CD8-positive, alpha-beta T cell (primary cell): ENCODE measurements at regions of chr13 and their contacts with region 1.

Region 1: GRCh38 chr13:46553886-46554858 is 1.2 kb downstream of the LRCH1 start:
- DNase-seq: peak; percentile 29 to 91 (median 66)
- ATAC-seq: peak; percentile 54
- H3K4me3 ChIP-seq: peak overlapping the region; percentile 87 to 95
- H3K4me3 Mint-ChIP-seq: peak overlapping the region; percentile 93
- H3K27ac ChIP-seq: peak overlapping the region; percentile 70 to 83
- H3K27ac Mint-ChIP-seq: peak overlapping the region; percentile 94
- H3K4me1 ChIP-seq: peaks cover 28% of the 10 kb centered on the region
- H3K4me1 Mint-ChIP-seq: peaks cover 53% of the 10 kb centered on the region
- H3K27me3 ChIP-seq: no peaks in the 10 kb centered on the region
- H3K27me3 Mint-ChIP-seq: no peaks in the 10 kb centered on the region
- CTCF ChIP-seq: no peak

Region 2: DNA sequence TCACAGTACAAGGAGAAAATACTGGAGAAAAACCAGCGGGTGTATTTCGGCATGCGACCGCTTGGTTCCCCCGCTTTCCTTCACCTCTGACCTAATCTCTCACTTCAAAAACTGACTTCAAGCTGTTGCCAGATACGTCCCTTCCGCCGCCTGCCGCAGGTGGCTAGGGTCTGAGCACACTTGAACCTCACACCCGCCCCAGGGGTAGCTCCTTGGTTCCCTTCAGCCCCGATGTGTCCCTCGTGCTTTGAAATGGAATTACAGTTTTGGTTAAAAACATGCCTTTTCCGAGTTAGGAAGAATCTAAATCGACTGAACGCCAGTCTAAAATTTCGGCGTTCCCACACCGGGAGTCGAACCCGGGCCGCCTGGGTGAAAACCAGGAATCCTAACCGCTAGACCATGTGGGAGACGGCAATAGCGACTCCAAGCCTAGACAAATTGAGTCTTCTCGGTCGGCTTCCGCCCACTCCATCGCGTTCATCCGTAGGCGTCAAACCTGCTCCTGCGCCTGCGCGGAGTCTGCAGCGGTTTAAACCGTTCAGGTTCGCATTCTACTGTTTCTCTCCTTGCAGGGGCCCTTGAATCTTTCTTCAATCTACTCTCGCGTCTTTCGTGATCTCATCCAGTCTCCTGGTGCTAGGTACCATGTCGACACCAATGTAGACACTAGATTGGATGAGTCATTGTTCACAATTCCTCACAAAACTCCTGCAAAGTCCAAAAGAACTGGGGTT is 1636.4 kb before region 1 on chr13:
- CTCF ChIA-PET with region 1: no interaction called
- POLR2A ChIA-PET with region 1: no interaction called
- intact Hi-C with region 1: loop called in 1 of 2 experiments (anchors 10 kb)
- DNase-seq: peak; percentile 95 to 99 (median 98)
- ATAC-seq: peak; percentile 78
- H3K4me3 ChIP-seq: peak overlapping the region; percentile 54 to 66
- H3K4me3 Mint-ChIP-seq: no peak overlapping the region
- H3K27ac ChIP-seq: peak overlapping the region; percentile 66 to 90
- H3K27ac Mint-ChIP-seq: no peak overlapping the region
- H3K4me1 ChIP-seq: peaks cover 7% of the 10 kb centered on the region
- H3K4me1 Mint-ChIP-seq: peaks cover 14% of the 10 kb centered on the region
- H3K27me3 ChIP-seq: no peaks in the 10 kb centered on the region
- H3K27me3 Mint-ChIP-seq: no peaks in the 10 kb centered on the region
- CTCF ChIP-seq: peak; percentile 39

Region 3: DNA sequence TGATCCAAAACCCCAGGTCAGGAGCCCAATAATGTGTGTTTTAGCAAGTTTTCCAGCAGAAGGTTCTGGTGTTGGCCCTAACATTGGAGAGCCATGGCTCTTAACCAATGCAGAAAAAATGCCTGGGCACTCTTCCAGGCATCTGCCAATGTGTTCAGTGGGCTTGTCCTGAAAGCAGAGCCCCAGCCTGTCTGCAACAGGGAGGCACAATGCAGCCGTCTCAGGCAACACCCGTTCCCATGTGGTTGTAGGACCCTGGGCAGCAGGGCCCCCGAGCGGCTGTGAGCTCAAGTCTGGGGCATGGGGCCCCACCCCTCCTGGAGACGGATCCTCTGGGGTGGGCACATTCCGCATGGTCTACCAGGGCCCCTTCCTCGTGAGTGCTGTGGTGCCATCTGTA is 644.5 kb before region 1 on chr13:
- CTCF ChIA-PET with region 1: no interaction called
- POLR2A ChIA-PET with region 1: no interaction called
- intact Hi-C with region 1: no loop called
- DNase-seq: no peak
- ATAC-seq: no peak
- H3K4me3 ChIP-seq: no peak overlapping the region
- H3K4me3 Mint-ChIP-seq: no peak overlapping the region
- H3K27ac ChIP-seq: no peak overlapping the region
- H3K27ac Mint-ChIP-seq: no peak overlapping the region
- H3K4me1 ChIP-seq: no peaks in the 10 kb centered on the region
- H3K4me1 Mint-ChIP-seq: no peaks in the 10 kb centered on the region
- H3K27me3 ChIP-seq: no peaks in the 10 kb centered on the region
- H3K27me3 Mint-ChIP-seq: no peaks in the 10 kb centered on the region
- CTCF ChIP-seq: no peak

Region 4: GRCh38 chr13:46492946-46493345 is 61.2 kb before region 1 on chr13:
- CTCF ChIA-PET with region 1: interaction called, 5 read pairs
- POLR2A ChIA-PET with region 1: no interaction called
- intact Hi-C with region 1: loop called (anchors 1 to 2 kb)
- DNase-seq: peak in 3 of 9 experiments; percentile 8 to 53 (median 42)
- ATAC-seq: no peak
- H3K4me3 ChIP-seq: no peak overlapping the region
- H3K4me3 Mint-ChIP-seq: no peak overlapping the region
- H3K27ac ChIP-seq: no peak overlapping the region
- H3K27ac Mint-ChIP-seq: no peak overlapping the region
- H3K4me1 ChIP-seq: no peaks in the 10 kb centered on the region
- H3K4me1 Mint-ChIP-seq: no peaks in the 10 kb centered on the region
- H3K27me3 ChIP-seq: no peaks in the 10 kb centered on the region
- H3K27me3 Mint-ChIP-seq: peaks cover 3% of the 10 kb centered on the region
- CTCF ChIP-seq: peak; percentile 79

Region 5: GRCh38 chr13:46603165-46603603 is 49.0 kb after region 1 on chr13:
- CTCF ChIA-PET with region 1: interaction called, 13 read pairs
- POLR2A ChIA-PET with region 1: no interaction called
- intact Hi-C with region 1: no loop called
- DNase-seq: no peak
- ATAC-seq: no peak
- H3K4me3 ChIP-seq: no peak overlapping the region
- H3K4me3 Mint-ChIP-seq: no peak overlapping the region
- H3K27ac ChIP-seq: no peak overlapping the region
- H3K27ac Mint-ChIP-seq: no peak overlapping the region
- H3K4me1 ChIP-seq: peaks cover 36% of the 10 kb centered on the region
- H3K4me1 Mint-ChIP-seq: peaks cover 84% of the 10 kb centered on the region
- H3K27me3 ChIP-seq: no peaks in the 10 kb centered on the region
- H3K27me3 Mint-ChIP-seq: no peaks in the 10 kb centered on the region
- CTCF ChIP-seq: no peak

Region 6: DNA sequence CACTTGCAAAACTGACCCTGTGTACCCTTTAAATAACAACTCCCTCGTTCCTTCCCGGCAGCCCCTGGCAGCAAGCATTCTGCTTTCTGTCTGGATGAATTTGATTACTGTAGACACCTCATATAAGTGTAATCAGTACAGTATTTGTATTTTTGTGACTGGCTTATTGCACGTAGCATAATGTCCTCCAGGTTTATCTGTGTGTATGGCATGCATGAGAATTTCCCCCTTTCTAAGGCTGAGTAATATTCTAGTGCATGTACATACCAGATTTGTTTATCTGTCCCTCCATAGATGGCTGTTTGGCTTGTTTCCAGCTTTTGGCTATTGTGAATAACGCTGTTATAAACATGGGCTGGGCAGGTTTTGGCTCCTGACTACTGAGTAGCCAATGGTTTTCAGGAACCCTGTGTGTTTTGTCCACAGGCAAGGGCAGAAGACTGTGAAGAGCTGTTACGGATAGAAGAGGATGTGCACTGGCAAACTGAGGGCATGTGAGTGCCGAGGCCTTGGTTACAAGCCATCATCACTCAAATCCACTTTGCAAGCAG is 144.8 kb after region 1 on chr13:
- CTCF ChIA-PET with region 1: interaction called, 11 read pairs
- POLR2A ChIA-PET with region 1: no interaction called
- intact Hi-C with region 1: no loop called
- DNase-seq: no peak
- ATAC-seq: no peak
- H3K4me3 ChIP-seq: no peak overlapping the region
- H3K4me3 Mint-ChIP-seq: no peak overlapping the region
- H3K27ac ChIP-seq: no peak overlapping the region
- H3K27ac Mint-ChIP-seq: no peak overlapping the region
- H3K4me1 ChIP-seq: no peaks in the 10 kb centered on the region
- H3K4me1 Mint-ChIP-seq: no peaks in the 10 kb centered on the region
- H3K27me3 ChIP-seq: no peaks in the 10 kb centered on the region
- H3K27me3 Mint-ChIP-seq: no peaks in the 10 kb centered on the region
- CTCF ChIP-seq: no peak

Region 7: DNA sequence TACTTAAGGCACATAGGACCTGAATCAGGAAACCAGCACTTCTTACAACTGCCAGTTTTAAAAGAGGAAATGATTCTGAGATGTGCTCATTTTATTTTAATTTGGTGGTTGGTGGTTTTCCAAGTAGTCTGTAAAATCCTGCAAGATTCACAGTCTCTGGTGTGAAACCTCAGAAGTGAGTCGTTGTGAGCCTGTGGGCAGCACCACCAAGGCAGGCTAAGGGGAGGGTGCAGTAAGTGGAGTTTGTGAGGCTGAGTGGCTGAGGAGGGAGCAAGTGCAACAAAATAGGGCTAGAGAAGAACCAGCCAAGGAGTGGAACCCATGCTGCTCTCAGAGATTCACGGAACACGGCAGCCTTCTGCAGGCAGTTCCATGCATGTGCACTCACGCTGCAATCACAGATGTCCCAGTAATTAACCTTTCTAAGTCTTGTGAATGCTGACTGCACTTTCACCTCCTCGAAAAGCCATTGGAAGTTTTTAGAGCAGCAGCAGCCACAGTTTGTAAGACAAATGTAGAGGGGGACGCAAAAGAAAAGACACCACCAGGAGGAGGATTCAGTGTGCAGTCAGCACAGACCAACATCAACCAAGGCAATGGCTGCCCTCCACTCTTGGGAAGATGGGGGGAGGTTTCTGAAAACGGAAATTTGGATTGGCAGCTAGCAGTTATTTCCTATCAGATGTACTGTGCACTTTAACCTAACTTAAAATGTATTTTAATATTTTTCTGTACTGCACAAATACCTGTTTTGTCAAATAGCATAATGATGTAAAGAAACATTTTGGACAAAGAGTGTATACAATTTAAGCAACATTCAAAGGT is 197.9 kb after region 1 on chr13:
- CTCF ChIA-PET with region 1: interaction called, 11 read pairs
- POLR2A ChIA-PET with region 1: no interaction called
- intact Hi-C with region 1: loop called in 1 of 2 experiments (anchors 1 kb)
- DNase-seq: peak; percentile 13 to 92 (median 48)
- ATAC-seq: peak; percentile 94
- H3K4me3 ChIP-seq: no peak overlapping the region
- H3K4me3 Mint-ChIP-seq: peak overlapping the region; percentile 19
- H3K27ac ChIP-seq: no peak overlapping the region
- H3K27ac Mint-ChIP-seq: peak overlapping the region; percentile 72
- H3K4me1 ChIP-seq: peaks cover 20% of the 10 kb centered on the region
- H3K4me1 Mint-ChIP-seq: peaks cover 35% of the 10 kb centered on the region
- H3K27me3 ChIP-seq: no peaks in the 10 kb centered on the region
- H3K27me3 Mint-ChIP-seq: no peaks in the 10 kb centered on the region
- CTCF ChIP-seq: no peak